B cell (primary cell): ENCODE measurements at regions of chr2 and their contacts with region 1.

Region 1: GRCh38 chr2:88903749-88904353 is 212.4 kb downstream of the RPIA start:
- DNase-seq: peak; percentile 61
- ATAC-seq: peak; percentile 67
- H3K4me3 ChIP-seq: no peak overlapping the region
- H3K4me3 Mint-ChIP-seq: no peak overlapping the region
- H3K27ac ChIP-seq: no peak overlapping the region
- H3K27ac Mint-ChIP-seq: no peak overlapping the region
- H3K4me1 ChIP-seq: no peaks in the 10 kb centered on the region
- H3K4me1 Mint-ChIP-seq: peaks cover 4% of the 10 kb centered on the region
- H3K27me3 ChIP-seq: no peaks in the 10 kb centered on the region
- H3K27me3 Mint-ChIP-seq: no peaks in the 10 kb centered on the region
- CTCF ChIP-seq: peak; percentile 62

Region 2: GRCh38 chr2:88765154-88765900 is 138.5 kb before region 1 on chr2:
- CTCF ChIA-PET with region 1: no interaction called
- POLR2A ChIA-PET with region 1: no interaction called
- intact Hi-C with region 1: no loop called
- DNase-seq: peak; percentile 67
- ATAC-seq: peak; percentile 61
- H3K4me3 ChIP-seq: peak overlapping the region in 4 of 5 experiments; percentile 15 to 55 (median 46)
- H3K4me3 Mint-ChIP-seq: peak overlapping the region; percentile 89
- H3K27ac ChIP-seq: no peak overlapping the region
- H3K27ac Mint-ChIP-seq: peak overlapping the region; percentile 22
- H3K4me1 ChIP-seq: peaks cover 13 to 14% of the 10 kb centered on the region in 2 donors
- H3K4me1 Mint-ChIP-seq: peaks cover 12% of the 10 kb centered on the region
- H3K27me3 ChIP-seq: peaks cover 0 to 14% (median 0%) of the 10 kb centered on the region in 4 experiments
- H3K27me3 Mint-ChIP-seq: peaks cover 5% of the 10 kb centered on the region
- CTCF ChIP-seq: no peak

Region 3: DNA sequence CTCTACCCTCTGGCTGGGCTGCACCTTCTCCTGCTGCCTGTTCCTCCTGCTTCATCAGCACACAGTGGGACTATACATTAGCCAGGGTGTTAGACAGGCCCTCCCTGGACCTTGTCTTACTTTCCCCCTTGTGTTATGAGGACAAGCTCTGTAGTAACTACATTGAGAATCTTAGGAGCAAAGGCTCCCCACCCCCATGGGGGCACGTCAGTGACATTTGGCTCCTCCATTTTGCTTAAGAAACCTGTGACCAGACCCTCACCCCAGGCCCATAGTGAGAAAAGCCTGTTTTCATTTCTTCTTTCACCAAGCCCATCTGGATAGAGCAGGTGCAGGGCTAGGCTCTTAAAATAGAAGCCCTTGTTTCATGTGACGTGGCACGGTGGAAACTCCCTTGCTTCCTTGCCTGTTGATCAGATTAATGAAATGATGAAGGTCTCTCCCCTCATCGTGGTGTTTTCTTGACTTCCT is 65.7 kb before region 1 on chr2:
- CTCF ChIA-PET with region 1: no interaction called
- POLR2A ChIA-PET with region 1: no interaction called
- intact Hi-C with region 1: no loop called
- DNase-seq: peak; percentile 91
- ATAC-seq: peak; percentile 85
- H3K4me3 ChIP-seq: peak overlapping the region in 2 of 5 experiments; percentile 7 to 45
- H3K4me3 Mint-ChIP-seq: peak overlapping the region; percentile 74
- H3K27ac ChIP-seq: peak overlapping the region; percentile 98 to 100
- H3K27ac Mint-ChIP-seq: peak overlapping the region; percentile 96
- H3K4me1 ChIP-seq: peaks cover 80 to 87% of the 10 kb centered on the region in 2 donors
- H3K4me1 Mint-ChIP-seq: peaks cover 81% of the 10 kb centered on the region
- H3K27me3 ChIP-seq: no peaks in the 10 kb centered on the region
- H3K27me3 Mint-ChIP-seq: no peaks in the 10 kb centered on the region
- CTCF ChIP-seq: no peak

Region 4: DNA sequence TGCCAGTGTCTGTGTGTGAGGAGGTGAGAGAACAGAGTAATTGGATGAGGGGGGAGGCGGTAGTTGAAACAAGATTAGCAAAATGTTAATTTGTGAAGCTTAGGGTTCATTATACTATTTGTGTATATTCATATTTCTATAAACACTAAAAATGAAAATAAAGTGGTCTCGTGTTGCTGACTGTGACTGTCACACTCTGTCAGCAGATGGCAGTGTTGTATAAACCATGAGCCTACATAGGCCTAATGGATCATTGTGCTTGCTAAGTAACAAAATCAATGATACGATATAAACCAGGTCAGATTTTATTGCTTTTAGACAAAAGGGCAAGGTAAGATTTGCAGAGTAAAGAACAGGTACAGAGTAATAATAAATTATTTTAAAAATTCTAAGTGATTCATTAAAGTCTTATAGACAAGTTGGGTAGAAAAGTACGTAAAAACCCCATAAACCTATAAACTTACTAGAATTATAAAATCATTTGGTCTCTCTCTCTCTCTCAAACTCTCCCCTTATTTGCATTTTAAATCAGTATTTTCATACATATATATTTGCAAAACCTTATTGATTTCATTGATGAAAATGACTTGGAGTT is 29.7 kb before region 1 on chr2:
- CTCF ChIA-PET with region 1: interaction called, 75 read pairs
- POLR2A ChIA-PET with region 1: no interaction called
- intact Hi-C with region 1: no loop called
- DNase-seq: peak; percentile 70
- ATAC-seq: no peak
- H3K4me3 ChIP-seq: no peak overlapping the region
- H3K4me3 Mint-ChIP-seq: no peak overlapping the region
- H3K27ac ChIP-seq: no peak overlapping the region
- H3K27ac Mint-ChIP-seq: no peak overlapping the region
- H3K4me1 ChIP-seq: peaks cover 15 to 21% of the 10 kb centered on the region in 2 donors
- H3K4me1 Mint-ChIP-seq: peaks cover 27% of the 10 kb centered on the region
- H3K27me3 ChIP-seq: no peaks in the 10 kb centered on the region
- H3K27me3 Mint-ChIP-seq: no peaks in the 10 kb centered on the region
- CTCF ChIP-seq: peak; percentile 64

Region 5: GRCh38 chr2:88919087-88919738 is 15.4 kb after region 1 on chr2:
- CTCF ChIA-PET with region 1: interaction called, 8 read pairs
- POLR2A ChIA-PET with region 1: no interaction called
- intact Hi-C with region 1: loop called (anchors 2 kb)
- DNase-seq: peak; percentile 29
- ATAC-seq: no peak
- H3K4me3 ChIP-seq: no peak overlapping the region
- H3K4me3 Mint-ChIP-seq: no peak overlapping the region
- H3K27ac ChIP-seq: no peak overlapping the region
- H3K27ac Mint-ChIP-seq: no peak overlapping the region
- H3K4me1 ChIP-seq: peaks cover 0 to 3% of the 10 kb centered on the region in 2 donors
- H3K4me1 Mint-ChIP-seq: peaks cover 4% of the 10 kb centered on the region
- H3K27me3 ChIP-seq: no peaks in the 10 kb centered on the region
- H3K27me3 Mint-ChIP-seq: no peaks in the 10 kb centered on the region
- CTCF ChIP-seq: peak; percentile 53